SK-N-SH (cell line): ENCODE measurements at regions of chr11 and their contacts with region 1.

Region 1: DNA sequence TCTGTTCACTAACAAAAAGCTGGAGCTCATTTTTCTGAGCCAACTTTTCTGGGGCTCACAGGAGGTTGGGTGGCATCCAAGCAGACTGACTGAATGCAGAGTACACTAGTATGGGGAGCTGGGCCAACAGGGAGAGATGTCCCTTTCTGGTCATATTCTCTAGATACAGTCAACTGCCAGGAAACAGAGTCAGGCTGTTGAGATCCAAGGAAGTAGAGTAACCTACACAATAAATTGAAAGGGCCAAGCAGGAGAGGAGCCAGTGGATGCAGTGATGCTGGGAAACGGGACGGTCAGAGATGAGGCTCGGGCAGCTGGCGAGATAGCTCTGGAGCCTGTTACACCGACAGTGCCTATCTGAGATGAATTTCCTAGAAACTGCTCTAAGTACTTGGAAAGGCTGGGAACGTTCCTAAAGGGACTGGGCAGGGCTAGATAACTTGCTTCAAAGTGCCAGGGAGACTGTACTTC is 71.1 kb downstream of the LARGE2 start:
- DNase-seq: no peak
- H3K4me3 ChIP-seq: no peak overlapping the region
- H3K27ac ChIP-seq: peak overlapping the region; percentile 36 to 46; a peak in 3 of 4 replicates
- H3K4me1 ChIP-seq: peaks cover 16 to 24% of the 10 kb centered on the region in 2 experiments; a peak in 3 of 4 replicates
- H3K27me3 ChIP-seq: no peaks in the 10 kb centered on the region
- CTCF ChIP-seq: no peak
- EP300 ChIP-seq: no peak
- RAD21 ChIP-seq: no peak

Region 2: DNA sequence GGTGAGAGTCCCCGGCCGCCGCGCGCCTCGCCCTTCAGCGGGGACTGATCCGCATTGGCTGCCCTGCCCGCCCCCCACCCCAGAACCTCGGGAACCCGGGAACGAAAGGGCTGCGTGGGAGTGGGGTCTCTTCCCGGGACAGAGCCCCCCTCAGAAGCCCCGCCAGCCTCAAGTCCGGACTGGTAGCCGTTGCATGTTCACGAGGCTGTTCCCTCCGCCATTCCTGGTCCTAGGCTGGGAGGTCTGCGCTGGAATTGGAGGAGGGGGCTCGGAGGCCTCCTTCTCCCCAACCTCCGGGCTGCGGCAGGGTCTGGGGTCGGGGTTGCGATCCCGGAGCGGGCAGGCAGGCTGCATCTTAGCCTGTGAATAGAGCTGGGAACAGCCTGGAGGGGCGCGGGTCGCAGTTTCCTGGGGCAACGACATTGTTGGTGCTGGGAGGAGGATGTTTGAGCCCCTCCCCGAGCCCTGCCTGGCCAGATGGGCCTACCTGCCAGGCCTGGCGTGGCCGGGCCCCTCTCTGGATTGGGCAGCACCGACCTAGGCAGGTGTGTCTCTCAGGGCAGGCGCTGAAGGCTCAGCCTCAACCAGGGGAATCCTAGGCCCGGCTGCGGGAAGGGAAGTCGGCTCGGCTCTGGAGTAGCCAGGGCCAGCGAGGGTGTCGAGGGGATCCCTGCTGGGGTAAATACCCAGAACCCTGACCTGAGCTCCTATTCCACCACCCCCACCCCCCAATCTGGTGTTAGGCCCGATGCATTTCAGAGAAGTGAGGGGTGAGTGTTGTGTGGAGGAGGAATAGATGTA is 107.4 kb before region 1 on chr11:
- CTCF ChIA-PET with region 1: no interaction called
- POLR2A ChIA-PET with region 1: no interaction called
- DNase-seq: peak; percentile 78
- H3K4me3 ChIP-seq: peak overlapping the region; percentile 66 to 67
- H3K27ac ChIP-seq: peak overlapping the region in 1 of 2 experiments; percentile 63; a peak in 1 of 4 replicates
- H3K4me1 ChIP-seq: peaks cover 3 to 48% of the 10 kb centered on the region in 2 experiments
- H3K27me3 ChIP-seq: no peaks in the 10 kb centered on the region
- CTCF ChIP-seq: no peak
- EP300 ChIP-seq: no peak
- RAD21 ChIP-seq: no peak

Region 3: GRCh38 chr11:45982656-45983470 is 10.7 kb before region 1 on chr11:
- CTCF ChIA-PET with region 1: interaction called, 13 read pairs
- POLR2A ChIA-PET with region 1: interaction called, 3 read pairs
- DNase-seq: peak; percentile 21
- H3K4me3 ChIP-seq: no peak overlapping the region
- H3K27ac ChIP-seq: peak overlapping the region in 1 of 2 experiments; percentile 53; a peak in 1 of 4 replicates
- H3K4me1 ChIP-seq: peaks cover 4 to 36% of the 10 kb centered on the region in 2 experiments; a peak in 3 of 4 replicates
- H3K27me3 ChIP-seq: no peaks in the 10 kb centered on the region
- CTCF ChIP-seq: no peak
- EP300 ChIP-seq: no peak
- RAD21 ChIP-seq: no peak

Region 4: DNA sequence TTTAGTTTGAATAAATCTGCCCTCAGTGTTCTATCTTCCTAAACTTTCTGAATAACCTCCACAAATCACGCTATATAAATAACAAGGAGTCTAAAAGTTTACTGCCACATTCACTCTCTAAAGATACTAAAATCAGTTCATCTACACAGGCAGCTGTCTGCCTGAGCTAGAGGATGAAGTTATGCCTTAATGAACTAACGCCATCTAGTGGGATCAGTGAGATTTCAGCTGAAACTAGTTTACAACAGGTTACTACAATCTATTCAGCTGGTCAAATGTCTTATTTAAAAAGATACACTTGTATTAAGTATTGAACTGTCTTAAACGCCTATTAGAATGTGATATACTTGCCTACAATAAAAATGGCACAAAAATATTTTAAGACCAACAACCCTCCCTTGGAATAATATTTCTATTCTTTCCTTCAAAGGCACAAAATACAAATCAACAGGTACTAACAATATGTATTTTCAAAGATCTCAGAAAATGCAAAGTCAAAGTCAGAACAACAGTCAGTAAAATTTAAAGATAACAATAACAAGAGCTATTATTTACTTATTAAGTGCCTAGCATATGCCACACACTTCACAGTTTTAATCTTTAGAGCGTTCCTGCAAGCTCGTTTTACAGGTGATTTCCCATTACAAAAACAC is 13.0 kb after region 1 on chr11:
- CTCF ChIA-PET with region 1: interaction called, 21 read pairs
- POLR2A ChIA-PET with region 1: no interaction called
- DNase-seq: peak; percentile 65
- H3K4me3 ChIP-seq: no peak overlapping the region; a peak in 1 of 4 replicates
- H3K27ac ChIP-seq: no peak overlapping the region
- H3K4me1 ChIP-seq: peaks cover 0 to 27% of the 10 kb centered on the region in 2 experiments; a peak in 2 of 4 replicates
- H3K27me3 ChIP-seq: no peaks in the 10 kb centered on the region
- CTCF ChIP-seq: peak; percentile 86
- EP300 ChIP-seq: no peak
- RAD21 ChIP-seq: peak; percentile 94

Region 5: GRCh38 chr11:46134540-46134939 is 141.0 kb after region 1 on chr11:
- CTCF ChIA-PET with region 1: no interaction called
- POLR2A ChIA-PET with region 1: no interaction called
- DNase-seq: no peak
- H3K4me3 ChIP-seq: no peak overlapping the region
- H3K27ac ChIP-seq: no peak overlapping the region
- H3K4me1 ChIP-seq: no peaks in the 10 kb centered on the region
- H3K27me3 ChIP-seq: no peaks in the 10 kb centered on the region
- CTCF ChIP-seq: no peak
- EP300 ChIP-seq: no peak
- RAD21 ChIP-seq: no peak